ENCODE measurements at regions of chr19 and their contacts with region 1.

Region 1: GRCh38 chr19:7522072-7522922 is at the start of gene MCOLN1:
- DNase-seq: peak; percentile 100
- H3K4me3 ChIP-seq: peak within 1 kb of the TSS; percentile 70 to 95 (median 83)
- H3K27ac ChIP-seq: peak within 1 kb of the TSS; percentile 66 to 80 (median 72)
- H3K4me1 ChIP-seq: peaks cover 15 to 55% (median 39%) of the 10 kb centered on the region in 4 donors
- H3K27me3 ChIP-seq: no peaks in the 10 kb centered on the region
- CTCF ChIP-seq: peak in 1 of 3 experiments; percentile 51
- EP300 ChIP-seq: no peak
- POLR2A ChIP-seq: peak; percentile 16
- total RNA-seq, gene MCOLN1: 11.3 to 20.7 (median 14.4) TPM

Region 2: DNA sequence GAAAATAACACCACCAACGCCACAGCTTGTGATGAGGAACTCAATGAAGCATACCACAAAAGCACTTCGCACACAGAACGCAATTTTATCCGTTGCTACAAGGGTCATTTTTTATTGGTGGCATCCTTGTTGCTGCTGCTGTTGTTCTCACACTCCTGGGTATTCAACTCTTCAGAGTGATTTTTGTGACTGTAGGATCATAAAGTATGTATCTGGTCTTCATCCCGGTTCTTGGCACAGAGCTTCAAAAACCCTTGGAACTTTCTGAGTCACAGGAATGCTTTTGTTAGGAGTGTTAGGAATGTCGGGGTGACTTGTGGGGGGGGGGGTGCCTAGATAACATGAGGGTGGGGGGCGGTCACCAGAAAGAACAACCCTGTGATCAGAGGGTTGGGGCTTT is 344.4 kb before region 1 on chr19:
- intact Hi-C with region 1: no loop called
- DNase-seq: no peak
- H3K4me3 ChIP-seq: no peak overlapping the region
- H3K27ac ChIP-seq: peak overlapping the region; percentile 41 to 63 (median 54)
- H3K4me1 ChIP-seq: peaks cover 36 to 50% (median 49%) of the 10 kb centered on the region in 4 donors
- H3K27me3 ChIP-seq: no peaks in the 10 kb centered on the region
- CTCF ChIP-seq: no peak
- EP300 ChIP-seq: no peak
- POLR2A ChIP-seq: no peak

Region 3: GRCh38 chr19:7427944-7428343 is 94.4 kb before region 1 on chr19:
- intact Hi-C with region 1: no loop called
- DNase-seq: no peak
- H3K4me3 ChIP-seq: no peak overlapping the region
- H3K27ac ChIP-seq: no peak overlapping the region
- H3K4me1 ChIP-seq: no peaks in the 10 kb centered on the region
- H3K27me3 ChIP-seq: no peaks in the 10 kb centered on the region
- CTCF ChIP-seq: no peak
- EP300 ChIP-seq: no peak
- POLR2A ChIP-seq: no peak

Region 4: GRCh38 chr19:7488736-7489353 is 33.5 kb before region 1 on chr19 and contains the start of gene PEX11G:
- intact Hi-C with region 1: loop called (anchors 5 kb)
- DNase-seq: peak; percentile 97
- H3K4me3 ChIP-seq: peak within 1 kb of the TSS; percentile 58 to 72 (median 70)
- H3K27ac ChIP-seq: peak within 1 kb of the TSS; percentile 86 to 88 (median 88)
- H3K4me1 ChIP-seq: peaks cover 0 to 22% (median 17%) of the 10 kb centered on the region in 4 donors
- H3K27me3 ChIP-seq: no peaks in the 10 kb centered on the region
- CTCF ChIP-seq: peak in 1 of 3 experiments; percentile 20
- EP300 ChIP-seq: no peak
- POLR2A ChIP-seq: peak; percentile 46
- total RNA-seq, gene PEX11G: 1.7 to 5.3 (median 3.7) TPM